Caco-2 (cell line): ENCODE measurements at regions of chr12 and their contacts with region 1.

Region 1: DNA sequence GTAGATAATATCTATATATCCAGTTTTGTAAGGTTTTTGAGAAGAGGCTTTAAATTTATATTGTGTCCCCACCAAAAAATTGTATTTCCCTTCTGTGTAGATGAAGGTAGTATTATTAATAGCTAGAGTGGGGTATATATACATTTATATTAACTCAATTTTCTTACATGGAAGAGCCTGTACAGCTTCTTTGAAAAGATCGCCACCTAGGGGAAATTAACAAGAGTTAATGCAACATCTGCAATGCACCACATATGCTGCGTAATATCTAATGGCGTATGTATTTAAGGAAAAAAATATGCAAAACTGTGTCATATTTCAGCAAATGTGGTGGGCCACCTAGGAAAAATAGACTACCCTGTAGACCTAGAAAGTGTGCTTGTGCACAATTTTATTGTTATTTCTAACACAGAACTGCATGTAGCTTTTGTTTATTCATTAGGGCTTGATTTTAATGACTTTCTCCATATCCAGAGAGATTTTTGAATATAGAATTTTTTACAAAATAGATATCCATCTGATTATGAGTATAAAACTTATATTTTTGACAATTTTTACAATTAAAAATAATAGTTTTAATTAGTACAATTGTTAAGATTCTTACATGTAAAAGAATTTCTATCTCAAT is 14.0 kb downstream of the CCER1 start:
- DNase-seq: no peak
- H3K4me3 ChIP-seq: no peak overlapping the region
- H3K4me3 Mint-ChIP-seq: no peak overlapping the region
- H3K27ac Mint-ChIP-seq: no peak overlapping the region
- H3K4me1 ChIP-seq: peaks cover 4% of the 10 kb centered on the region; the same call in 1 of the 2 replicates
- H3K4me1 Mint-ChIP-seq: no peaks in the 10 kb centered on the region
- H3K27me3 ChIP-seq: no peaks in the 10 kb centered on the region
- H3K27me3 Mint-ChIP-seq: no peaks in the 10 kb centered on the region
- CTCF ChIP-seq: peak; percentile 48 to 57

Region 2: GRCh38 chr12:90274407-90274806 is 666.6 kb before region 1 on chr12:
- CTCF ChIA-PET with region 1: no interaction called
- POLR2A ChIA-PET with region 1: no interaction called
- intact Hi-C with region 1: loop called (anchors 1 kb)
- DNase-seq: no peak
- H3K4me3 ChIP-seq: no peak overlapping the region
- H3K4me3 Mint-ChIP-seq: no peak overlapping the region
- H3K27ac Mint-ChIP-seq: no peak overlapping the region
- H3K4me1 ChIP-seq: no peaks in the 10 kb centered on the region
- H3K4me1 Mint-ChIP-seq: no peaks in the 10 kb centered on the region
- H3K27me3 ChIP-seq: no peaks in the 10 kb centered on the region
- H3K27me3 Mint-ChIP-seq: no peaks in the 10 kb centered on the region
- CTCF ChIP-seq: peak in 1 of 2 experiments; percentile 4

Region 3: DNA sequence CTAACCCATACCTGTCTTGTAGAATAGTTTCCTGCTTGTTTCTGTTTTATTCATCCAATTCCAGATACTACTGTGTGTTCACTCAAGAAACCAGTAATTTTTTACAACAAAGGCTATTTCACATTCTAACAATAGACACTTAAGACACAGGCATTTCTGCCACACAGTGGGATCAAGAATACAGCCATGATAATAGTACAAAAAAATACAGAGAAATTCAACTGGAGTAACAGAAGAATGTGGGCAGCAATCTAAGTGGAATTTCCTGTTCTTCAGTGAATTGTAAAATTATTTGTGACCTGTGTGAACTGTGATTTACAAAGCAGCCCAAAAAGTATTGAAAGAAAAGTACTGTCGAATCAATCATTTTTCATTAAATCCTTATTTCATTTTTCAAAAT is 268.9 kb before region 1 on chr12:
- CTCF ChIA-PET with region 1: no interaction called
- POLR2A ChIA-PET with region 1: no interaction called
- intact Hi-C with region 1: loop called (anchors 10 kb)
- DNase-seq: no peak
- H3K4me3 ChIP-seq: no peak overlapping the region
- H3K4me3 Mint-ChIP-seq: no peak overlapping the region
- H3K27ac Mint-ChIP-seq: no peak overlapping the region
- H3K4me1 ChIP-seq: no peaks in the 10 kb centered on the region
- H3K4me1 Mint-ChIP-seq: no peaks in the 10 kb centered on the region
- H3K27me3 ChIP-seq: no peaks in the 10 kb centered on the region
- H3K27me3 Mint-ChIP-seq: no peaks in the 10 kb centered on the region
- CTCF ChIP-seq: no peak

Region 4: DNA sequence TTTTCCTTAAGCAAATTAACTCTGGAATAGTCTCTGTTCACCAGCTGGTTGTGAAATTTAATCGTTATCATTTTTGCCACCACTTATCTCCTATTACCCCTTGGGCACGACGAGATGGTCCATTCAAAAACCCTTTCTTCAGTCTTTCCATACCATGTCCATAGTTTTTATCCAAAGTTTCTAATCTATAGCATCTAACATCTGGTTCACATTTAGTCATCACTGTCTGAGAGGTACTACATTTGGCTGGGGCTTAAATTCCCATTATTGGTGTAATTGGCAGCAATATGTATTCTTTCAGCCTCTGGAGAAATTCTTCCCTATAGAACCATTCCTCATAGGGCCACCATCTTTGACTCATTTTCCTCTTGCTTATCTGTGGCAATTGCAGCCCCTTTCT is 149.5 kb before region 1 on chr12:
- CTCF ChIA-PET with region 1: no interaction called
- POLR2A ChIA-PET with region 1: no interaction called
- intact Hi-C with region 1: loop called (anchors 2 kb)
- DNase-seq: no peak
- H3K4me3 ChIP-seq: no peak overlapping the region
- H3K4me3 Mint-ChIP-seq: no peak overlapping the region
- H3K27ac Mint-ChIP-seq: no peak overlapping the region
- H3K4me1 ChIP-seq: no peaks in the 10 kb centered on the region
- H3K4me1 Mint-ChIP-seq: no peaks in the 10 kb centered on the region
- H3K27me3 ChIP-seq: no peaks in the 10 kb centered on the region
- H3K27me3 Mint-ChIP-seq: no peaks in the 10 kb centered on the region
- CTCF ChIP-seq: no peak

Region 5: GRCh38 chr12:90959538-90960139 is 18.7 kb after region 1 on chr12:
- CTCF ChIA-PET with region 1: interaction called, 41 read pairs
- POLR2A ChIA-PET with region 1: no interaction called
- intact Hi-C with region 1: loop called (anchors 1 kb)
- DNase-seq: peak in 1 of 2 experiments; percentile 43
- H3K4me3 ChIP-seq: no peak overlapping the region
- H3K4me3 Mint-ChIP-seq: no peak overlapping the region
- H3K27ac Mint-ChIP-seq: no peak overlapping the region
- H3K4me1 ChIP-seq: no peaks in the 10 kb centered on the region
- H3K4me1 Mint-ChIP-seq: no peaks in the 10 kb centered on the region
- H3K27me3 ChIP-seq: no peaks in the 10 kb centered on the region
- H3K27me3 Mint-ChIP-seq: no peaks in the 10 kb centered on the region
- CTCF ChIP-seq: peak; percentile 50 to 70

Region 6: DNA sequence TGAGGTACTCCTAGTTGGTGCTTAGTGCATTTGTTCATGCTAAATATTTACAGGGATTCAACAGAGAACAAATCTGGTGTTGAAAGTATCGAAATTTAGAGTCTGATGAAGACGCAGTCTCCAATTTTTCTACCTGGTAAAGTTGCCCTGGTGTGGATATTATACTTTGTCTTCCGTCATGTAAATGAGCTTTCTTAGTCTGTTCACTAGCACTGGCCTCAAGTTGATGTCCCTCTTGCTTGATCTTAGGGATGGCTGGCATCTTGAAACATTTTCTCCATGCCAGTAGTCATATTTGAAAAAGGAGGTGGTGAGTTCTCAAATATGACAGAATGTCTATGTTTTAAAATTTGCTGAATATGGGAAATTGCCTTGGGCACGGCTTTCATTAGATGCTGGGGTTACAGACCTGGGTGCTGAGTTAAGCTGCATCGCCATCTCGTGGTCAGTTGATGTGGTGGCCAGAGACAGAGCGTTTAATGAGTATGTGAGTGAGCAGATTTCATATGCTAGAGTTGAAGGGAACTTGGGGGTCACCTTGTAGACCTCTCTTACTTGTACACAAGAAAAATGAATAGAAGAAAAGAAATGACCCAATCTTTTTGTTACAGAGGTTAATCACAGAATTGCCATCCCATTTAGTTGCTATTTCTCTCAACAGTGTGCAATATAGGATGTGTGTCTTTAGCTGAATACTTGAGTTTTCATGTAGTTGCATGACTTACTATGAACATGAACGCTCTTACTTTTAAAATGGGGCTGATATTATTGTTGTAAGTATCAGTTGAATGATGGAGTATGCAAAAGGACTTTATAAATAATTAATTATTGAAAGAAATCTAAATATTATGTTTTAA is 414.4 kb after region 1 on chr12:
- CTCF ChIA-PET with region 1: interaction called, 6 read pairs
- POLR2A ChIA-PET with region 1: no interaction called
- intact Hi-C with region 1: loop called (anchors 1 kb)
- DNase-seq: peak; percentile 58 to 70
- H3K4me3 ChIP-seq: no peak overlapping the region
- H3K4me3 Mint-ChIP-seq: no peak overlapping the region
- H3K27ac Mint-ChIP-seq: no peak overlapping the region
- H3K4me1 ChIP-seq: peaks cover 16% of the 10 kb centered on the region
- H3K4me1 Mint-ChIP-seq: peaks cover 8% of the 10 kb centered on the region
- H3K27me3 ChIP-seq: no peaks in the 10 kb centered on the region
- H3K27me3 Mint-ChIP-seq: no peaks in the 10 kb centered on the region
- CTCF ChIP-seq: peak; percentile 66 to 83